GM10248 (cell line): ENCODE measurements at regions of chr6 and their contacts with region 1.

Region 1: DNA sequence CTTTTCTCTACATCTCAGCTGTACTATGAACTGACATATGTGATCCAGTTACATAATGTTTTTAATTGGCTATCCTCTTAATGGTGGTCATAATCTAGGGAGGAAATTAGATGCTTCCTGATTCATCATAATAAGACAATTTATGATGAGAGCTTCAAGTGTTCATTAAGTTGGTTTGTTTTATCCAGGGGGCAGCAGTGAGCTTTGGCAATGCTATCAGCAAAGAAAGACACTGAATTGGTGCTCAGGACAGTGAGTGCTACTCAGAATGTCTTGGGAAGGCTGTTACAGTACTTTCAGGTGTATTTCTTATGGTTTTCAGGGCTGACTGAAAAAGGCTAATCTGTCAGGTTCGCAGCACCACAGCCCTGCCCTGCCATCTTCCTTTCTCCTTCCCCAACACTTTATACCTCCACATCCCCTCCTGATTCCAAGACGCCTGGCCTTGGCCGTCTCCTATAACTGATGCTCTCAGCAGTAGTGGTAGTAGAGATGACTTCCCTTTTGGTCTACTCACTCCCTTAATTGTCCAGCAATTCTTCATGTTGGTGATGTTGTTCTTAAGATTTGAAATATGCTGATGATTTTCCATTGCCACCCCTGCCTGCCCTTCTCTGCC is 67.0 kb upstream of the TNFAIP3 start:
- DNase-seq: peak; percentile 53
- CTCF ChIP-seq: peak; percentile 60

Region 2: GRCh38 chr6:137761103-137761886 is 38.8 kb before region 1 on chr6:
- CTCF ChIA-PET with region 1: interaction called, 10 read pairs
- POLR2A ChIA-PET with region 1: no interaction called
- DNase-seq: no peak
- CTCF ChIP-seq: no peak

Region 3: GRCh38 chr6:137775227-137775626 is 24.8 kb before region 1 on chr6:
- CTCF ChIA-PET with region 1: interaction called, 14 read pairs
- POLR2A ChIA-PET with region 1: no interaction called
- DNase-seq: no peak
- CTCF ChIP-seq: no peak

Region 4: DNA sequence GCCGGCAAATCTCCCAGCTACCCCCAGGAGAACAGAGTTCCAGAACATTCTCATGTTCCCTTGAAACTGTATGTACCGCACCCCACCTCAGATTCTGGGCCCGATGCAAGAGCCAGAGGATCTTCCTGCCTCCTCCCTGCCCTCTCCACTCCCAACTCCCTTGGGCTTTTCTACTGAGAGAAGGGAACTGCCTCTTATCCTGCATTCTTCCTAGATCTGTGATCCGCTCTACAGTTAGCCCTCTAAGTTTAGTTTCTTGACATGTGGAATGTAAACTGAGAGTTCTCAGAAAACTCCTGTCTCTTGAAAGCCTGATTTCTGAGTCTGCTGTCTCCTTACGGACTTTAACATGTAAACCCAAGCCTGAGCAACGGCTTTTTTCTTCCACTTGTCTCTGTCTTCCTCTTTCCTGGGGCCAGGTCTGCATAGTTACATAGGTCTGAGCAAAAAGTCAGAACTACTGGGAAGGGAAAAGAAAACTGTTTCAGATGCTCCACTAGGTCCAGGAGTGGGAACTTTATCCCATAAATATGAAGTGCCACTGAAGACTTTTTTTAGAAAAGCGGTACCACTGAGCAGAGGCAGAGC is 19.5 kb before region 1 on chr6:
- CTCF ChIA-PET with region 1: interaction called, 27 read pairs
- POLR2A ChIA-PET with region 1: no interaction called
- DNase-seq: no peak
- CTCF ChIP-seq: no peak

Region 5: GRCh38 chr6:137811121-137811915 is 11.3 kb after region 1 on chr6:
- CTCF ChIA-PET with region 1: interaction called, 73 read pairs
- POLR2A ChIA-PET with region 1: no interaction called
- DNase-seq: peak; percentile 82
- CTCF ChIP-seq: no peak

Region 6: DNA sequence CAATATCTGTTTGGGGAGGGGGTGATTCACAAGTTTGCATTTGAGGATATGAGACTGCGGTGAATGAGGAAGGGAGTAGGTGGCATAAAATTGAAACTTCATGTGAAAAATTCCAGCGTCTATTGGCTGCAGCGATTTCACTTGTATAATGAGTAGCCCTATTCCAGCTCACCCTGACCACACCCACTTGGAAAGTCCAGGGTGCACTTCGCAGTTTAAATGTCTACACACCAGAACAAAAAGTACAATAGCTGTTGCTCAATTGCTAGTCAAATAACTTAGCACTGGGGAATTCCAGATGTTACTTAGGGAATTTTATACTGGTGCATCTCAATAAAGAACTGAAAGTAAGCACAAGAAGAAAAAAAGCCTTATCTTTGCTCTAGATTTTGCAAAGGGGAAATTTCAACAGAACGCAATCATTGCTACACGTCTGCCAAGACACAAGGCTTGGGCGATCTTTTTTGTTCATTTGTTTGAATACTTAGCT is 73.3 kb after region 1 on chr6:
- CTCF ChIA-PET with region 1: interaction called, 29 read pairs
- POLR2A ChIA-PET with region 1: no interaction called
- DNase-seq: peak; percentile 54
- CTCF ChIP-seq: no peak

Region 7: DNA sequence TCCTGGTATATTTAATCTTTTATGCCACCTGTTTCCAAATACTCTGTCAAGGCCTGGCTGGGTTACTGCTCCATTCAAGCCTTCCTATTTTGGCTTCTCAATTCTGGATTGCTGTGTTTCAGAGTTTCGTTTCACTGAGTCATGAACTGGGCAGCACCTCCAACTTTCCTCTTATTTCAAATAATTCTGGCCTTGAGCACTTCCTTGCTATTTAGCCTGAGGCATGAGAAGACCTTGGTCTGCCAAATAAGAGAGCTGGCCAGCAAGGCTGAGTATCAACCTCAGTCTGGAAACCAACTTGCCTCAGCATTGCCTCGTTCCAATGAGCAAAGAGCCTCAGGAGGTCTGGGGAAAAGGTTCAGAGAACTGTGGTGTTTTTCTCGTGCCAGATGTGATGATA is 133.6 kb after region 1 on chr6:
- CTCF ChIA-PET with region 1: interaction called, 13 read pairs
- POLR2A ChIA-PET with region 1: no interaction called
- DNase-seq: no peak
- CTCF ChIP-seq: no peak